Activated B cell treated with CpG ODN at 0.5 μM for 24 hours (primary cell): ENCODE measurements at regions of chr19 and their contacts with region 1.

Region 1: GRCh38 chr19:33311326-33311682 is 9.0 kb upstream of the CEBPA start:
- DNase-seq: no peak
- ATAC-seq: no peak
- H3K4me3 Mint-ChIP-seq: no peak overlapping the region
- H3K27ac Mint-ChIP-seq: no peak overlapping the region
- H3K4me1 Mint-ChIP-seq: no peaks in the 10 kb centered on the region
- H3K27me3 Mint-ChIP-seq: peaks cover 26% of the 10 kb centered on the region
- CTCF ChIP-seq: no peak

Region 2: DNA sequence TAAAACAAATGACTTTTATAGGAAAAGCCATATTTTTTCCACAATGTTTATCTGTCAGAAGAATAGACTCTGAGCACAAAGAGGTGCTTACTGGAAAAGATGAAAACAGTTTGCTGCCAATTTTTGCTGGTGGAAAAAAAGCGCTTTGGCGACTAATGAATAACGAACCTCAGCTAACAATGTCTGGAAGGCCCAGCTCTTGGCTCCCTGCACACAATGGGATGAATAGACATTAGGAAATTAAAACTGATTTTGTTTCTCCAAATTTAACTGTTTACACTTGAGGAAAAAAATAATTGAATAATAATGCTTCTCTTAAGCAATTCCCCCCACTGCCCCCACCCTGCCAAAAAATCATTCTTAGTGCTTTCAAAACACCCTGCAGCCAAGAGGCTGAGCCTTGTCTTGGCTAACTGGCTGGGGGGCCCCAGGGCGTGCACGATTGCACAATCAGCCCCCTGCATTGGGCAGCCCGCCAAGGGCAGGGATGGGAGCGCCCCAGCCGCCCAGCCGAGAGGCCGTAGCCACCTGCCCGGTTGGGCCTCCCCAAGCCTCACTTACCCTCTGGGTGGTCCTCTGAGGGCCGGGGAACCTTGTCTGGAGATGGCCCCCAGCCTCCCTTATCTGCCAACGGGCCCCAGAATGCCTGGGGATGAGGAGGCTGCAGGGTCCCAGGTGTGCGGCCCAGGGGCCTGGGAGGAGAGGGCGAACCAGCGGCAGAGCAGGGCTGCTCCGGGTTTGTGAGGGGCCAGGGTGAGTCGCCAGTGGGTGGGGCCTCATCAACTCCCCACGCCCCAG is 79.0 kb after region 1 on chr19:
- CTCF ChIA-PET with region 1: no interaction called
- POLR2A ChIA-PET with region 1: interaction called, 15 read pairs
- intact Hi-C with region 1: no loop called
- DNase-seq: no peak
- ATAC-seq: no peak
- H3K4me3 Mint-ChIP-seq: no peak overlapping the region
- H3K27ac Mint-ChIP-seq: no peak overlapping the region
- H3K4me1 Mint-ChIP-seq: no peaks in the 10 kb centered on the region
- H3K27me3 Mint-ChIP-seq: no peaks in the 10 kb centered on the region
- CTCF ChIP-seq: no peak

Region 3: GRCh38 chr19:33550768-33551167 is 239.5 kb after region 1 on chr19:
- CTCF ChIA-PET with region 1: no interaction called
- POLR2A ChIA-PET with region 1: no interaction called
- intact Hi-C with region 1: no loop called
- DNase-seq: no peak
- ATAC-seq: no peak
- H3K4me3 Mint-ChIP-seq: no peak overlapping the region
- H3K27ac Mint-ChIP-seq: no peak overlapping the region
- H3K4me1 Mint-ChIP-seq: no peaks in the 10 kb centered on the region
- H3K27me3 Mint-ChIP-seq: no peaks in the 10 kb centered on the region
- CTCF ChIP-seq: no peak